IMR-90 (cell line): ENCODE measurements at regions of chr9 and their contacts with region 1.

Region 1: DNA sequence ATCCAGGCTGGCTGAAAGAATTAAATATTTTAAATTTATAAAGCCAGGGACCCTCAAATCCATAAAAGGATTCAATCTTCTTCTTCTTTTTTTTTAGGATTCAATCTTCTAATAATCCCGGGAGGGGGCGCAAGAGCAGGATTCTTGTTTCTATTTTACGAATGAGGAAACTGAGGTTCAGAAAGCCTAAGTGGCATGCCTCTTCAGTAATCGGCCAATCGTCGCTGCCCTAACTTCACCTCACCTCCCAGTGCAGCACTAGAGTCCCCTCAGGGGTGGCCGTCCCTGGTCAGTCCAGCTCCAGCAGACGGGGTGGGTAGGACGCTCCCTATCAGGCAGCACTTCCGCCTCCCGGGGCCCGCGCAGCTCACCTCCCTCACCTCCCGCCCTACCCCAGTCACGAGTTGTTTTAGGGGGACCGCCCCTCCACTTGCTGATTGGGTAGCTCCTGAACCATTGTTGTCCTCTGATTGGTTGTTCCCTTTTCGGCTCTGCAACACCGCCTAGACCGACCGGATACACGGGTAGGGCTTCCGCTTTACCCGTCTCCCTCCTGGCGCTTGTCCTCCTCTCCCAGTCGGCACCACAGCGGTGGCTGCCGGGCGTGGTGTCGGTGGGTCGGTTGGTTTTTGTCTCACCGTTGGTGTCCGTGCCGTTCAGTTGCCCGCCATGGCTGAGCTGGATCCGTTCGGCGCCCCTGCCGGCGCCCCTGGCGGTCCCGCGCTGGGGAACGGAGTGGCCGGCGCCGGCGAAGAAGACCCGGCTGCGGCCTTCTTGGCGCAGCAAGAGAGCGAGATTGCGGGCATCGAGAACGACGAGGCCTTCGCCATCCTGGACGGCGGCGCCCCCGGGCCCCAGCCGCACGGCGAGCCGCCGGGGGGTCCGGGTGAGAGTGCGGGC is at the start of gene CLTA:
- DNase-seq: peak; percentile 99
- ATAC-seq: peak; percentile 93
- H3K4me3 ChIP-seq: peak within 1 kb of the TSS; percentile 74
- H3K27ac ChIP-seq: peak within 1 kb of the TSS; percentile 93
- H3K4me1 ChIP-seq: peaks cover 15% of the 10 kb centered on the region
- H3K27me3 ChIP-seq: no peaks in the 10 kb centered on the region
- CTCF ChIP-seq: peak; percentile 60
- POLR2A ChIP-seq: peak; percentile 99
- RAD21 ChIP-seq: peak; percentile 25; the same call in 1 of the 2 replicates
- total RNA-seq, gene CLTA: 133 and 208 TPM in 2 replicates

Region 2: GRCh38 chr9:36136272-36136893 is 54.3 kb before region 1 on chr9 and contains the start of gene GLIPR2:
- CTCF ChIA-PET with region 1: interaction called, 3 read pairs
- POLR2A ChIA-PET with region 1: no interaction called
- dilution Hi-C with region 1: no loop called
- in situ Hi-C with region 1: no loop called
- intact Hi-C with region 1: loop called (anchors 2 kb)
- DNase-seq: peak; percentile 65
- ATAC-seq: peak; percentile 97
- H3K4me3 ChIP-seq: peak within 1 kb of the TSS; percentile 78
- H3K27ac ChIP-seq: peak within 1 kb of the TSS; percentile 65
- H3K4me1 ChIP-seq: peaks cover 17% of the 10 kb centered on the region
- H3K27me3 ChIP-seq: no peaks in the 10 kb centered on the region
- CTCF ChIP-seq: peak; percentile 37
- POLR2A ChIP-seq: peak; percentile 44; the same call in 1 of the 2 replicates
- RAD21 ChIP-seq: peak; percentile 26; the same call in 1 of the 2 replicates
- total RNA-seq, gene GLIPR2: 35.8 and 37.8 TPM in 2 replicates

Region 3: GRCh38 chr9:36204906-36205547 is 14.4 kb after region 1 on chr9:
- CTCF ChIA-PET with region 1: interaction called, 6 read pairs
- POLR2A ChIA-PET with region 1: interaction called, 7 read pairs
- dilution Hi-C with region 1: no loop called
- in situ Hi-C with region 1: no loop called
- intact Hi-C with region 1: loop called (anchors 2 kb)
- DNase-seq: no peak
- ATAC-seq: 0 out of 2 replicates have a peak, but pooled peaks have one; percentile 13
- H3K4me3 ChIP-seq: no peak overlapping the region
- H3K27ac ChIP-seq: no peak overlapping the region
- H3K4me1 ChIP-seq: peaks cover 20% of the 10 kb centered on the region
- H3K27me3 ChIP-seq: no peaks in the 10 kb centered on the region
- CTCF ChIP-seq: peak; percentile 21; the same call in 1 of the 2 replicates
- POLR2A ChIP-seq: no peak
- RAD21 ChIP-seq: no peak

Region 4: DNA sequence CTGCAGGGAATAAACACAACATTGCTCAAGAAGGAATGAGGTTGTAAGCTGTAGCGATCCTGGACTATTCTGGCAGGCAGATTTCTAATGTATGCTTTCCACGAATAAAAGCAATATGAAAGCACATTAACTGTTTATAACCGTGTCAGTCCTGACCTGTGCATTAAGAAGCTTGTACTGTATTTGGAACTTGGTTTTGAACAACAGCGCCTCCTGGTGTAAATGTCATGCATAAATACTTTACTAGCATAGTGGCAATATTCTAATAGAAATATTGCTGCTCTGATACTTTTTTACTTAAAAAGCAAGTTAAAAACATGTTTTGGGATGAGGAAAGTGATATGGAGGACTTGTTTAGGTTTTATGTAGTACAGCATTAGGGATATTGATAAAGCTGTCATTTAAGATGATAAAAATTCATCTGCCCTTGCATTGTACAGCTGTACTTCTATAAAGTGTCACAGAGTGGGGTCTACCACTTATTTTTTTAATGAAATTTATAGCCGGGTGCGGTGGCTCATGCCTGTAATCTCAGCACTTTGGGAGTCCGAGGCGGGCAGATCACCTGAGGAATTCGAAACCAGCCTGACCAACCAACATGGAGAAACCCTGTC is 138.3 kb after region 1 on chr9:
- CTCF ChIA-PET with region 1: no interaction called
- POLR2A ChIA-PET with region 1: interaction called, 3 read pairs
- dilution Hi-C with region 1: no loop called
- in situ Hi-C with region 1: no loop called
- intact Hi-C with region 1: loop called (anchors 5 kb)
- DNase-seq: peak; percentile 80
- ATAC-seq: peak; percentile 71
- H3K4me3 ChIP-seq: peak overlapping the region; percentile 4; the same call in 1 of the 2 replicates
- H3K27ac ChIP-seq: no peak overlapping the region
- H3K4me1 ChIP-seq: peaks cover 3% of the 10 kb centered on the region
- H3K27me3 ChIP-seq: no peaks in the 10 kb centered on the region
- CTCF ChIP-seq: peak; percentile 80
- POLR2A ChIP-seq: no peak
- RAD21 ChIP-seq: peak; percentile 80